ENCODE measurements at regions of chr3 and their contacts with region 1.

Region 1: GRCh38 chr3:44729384-44729910 is at the start of gene ZNF501:
- DNase-seq: peak; percentile 97
- ATAC-seq: peak; percentile 100
- total RNA-seq, gene ZNF501: 4.0 to 5.0 TPM

Region 2: GRCh38 chr3:44712455-44713075 is 16.9 kb before region 1 on chr3 and contains the start of gene ZNF502:
- intact Hi-C with region 1: loop called in 1 of 2 experiments (anchors 2 kb)
- DNase-seq: peak; percentile 92
- ATAC-seq: peak; percentile 99
- total RNA-seq, gene ZNF502: 3.4 to 4.4 TPM

Region 3: DNA sequence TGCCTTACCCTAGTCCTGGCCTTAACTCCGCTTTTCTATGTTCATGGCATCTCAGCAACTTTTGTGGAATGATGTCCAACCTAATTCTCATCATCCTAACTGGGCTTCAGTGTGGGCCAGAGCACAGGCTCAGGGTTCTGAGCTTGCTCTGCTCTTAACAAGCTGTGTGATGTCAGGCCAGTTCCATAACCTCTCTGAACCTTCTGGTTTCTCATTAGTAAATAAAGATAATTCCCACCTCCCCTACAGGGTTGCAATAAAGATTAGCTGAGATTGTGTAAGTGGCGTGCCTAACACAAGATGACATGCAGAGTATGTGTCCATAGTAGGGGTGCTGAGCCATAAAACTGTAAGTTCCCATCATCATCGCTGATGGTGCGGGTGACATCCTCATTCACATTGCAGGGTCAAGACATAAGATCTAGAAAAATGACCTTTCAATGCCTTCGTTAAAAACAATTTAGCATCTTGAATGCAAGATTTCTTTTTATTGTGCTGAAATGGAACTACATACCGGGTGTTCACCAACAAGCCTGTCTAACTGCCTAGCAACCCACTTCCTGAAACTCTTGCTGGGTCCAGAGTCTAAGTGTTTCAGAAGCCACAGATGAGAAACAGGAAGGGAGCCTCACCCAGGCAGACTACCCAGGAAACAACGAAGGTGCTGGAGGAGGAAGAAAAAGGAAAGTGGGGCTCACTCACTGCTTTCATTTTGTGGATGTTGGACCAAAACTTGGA is 380.5 kb after region 1 on chr3:
- intact Hi-C with region 1: no loop called
- DNase-seq: no peak
- ATAC-seq: no peak

Measured in left cardiac atrium (tissue), 4 donors.